ENCODE measurements at regions of chr14 and their contacts with region 1.

Region 1: GRCh38 chr14:22319526-22320361 is 269.3 kb downstream of the DAD1 start:
- DNase-seq: peak in 1 of 2 donors; percentile 17
- ATAC-seq: peak in 1 of 2 donors; percentile 46
- H3K4me3 ChIP-seq: no peak overlapping the region
- H3K27ac ChIP-seq: no peak overlapping the region
- H3K4me1 ChIP-seq: no peaks in the 10 kb centered on the region
- H3K27me3 ChIP-seq: no peaks in the 10 kb centered on the region
- CTCF ChIP-seq: peak; percentile 17 to 60 (median 43)
- POLR2A ChIP-seq: no peak

Region 2: DNA sequence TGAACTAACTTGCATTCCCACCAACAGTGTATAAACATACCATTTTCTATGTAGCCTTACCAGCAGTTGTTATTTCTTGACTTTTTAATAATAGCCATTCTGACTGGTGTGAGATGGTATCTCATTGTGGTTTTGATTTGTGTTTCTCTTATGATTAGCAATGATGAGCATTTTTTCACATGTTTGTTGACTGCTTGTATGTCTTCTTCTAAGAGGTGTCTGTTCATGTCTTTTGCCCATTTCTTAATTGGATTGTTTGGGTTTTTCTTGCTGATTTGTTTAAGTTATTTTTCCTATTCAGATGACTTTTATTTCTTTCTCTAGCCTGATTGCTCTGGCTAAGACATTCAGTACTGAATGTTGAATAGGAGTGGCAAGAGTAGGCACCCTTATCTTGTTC is 39.0 kb after region 1 on chr14:
- in situ Hi-C with region 1: no loop called
- intact Hi-C with region 1: no loop called
- DNase-seq: no peak
- ATAC-seq: no peak
- H3K4me3 ChIP-seq: no peak overlapping the region
- H3K27ac ChIP-seq: no peak overlapping the region
- H3K4me1 ChIP-seq: no peaks in the 10 kb centered on the region
- H3K27me3 ChIP-seq: no peaks in the 10 kb centered on the region
- CTCF ChIP-seq: no peak
- POLR2A ChIP-seq: no peak

Region 3: DNA sequence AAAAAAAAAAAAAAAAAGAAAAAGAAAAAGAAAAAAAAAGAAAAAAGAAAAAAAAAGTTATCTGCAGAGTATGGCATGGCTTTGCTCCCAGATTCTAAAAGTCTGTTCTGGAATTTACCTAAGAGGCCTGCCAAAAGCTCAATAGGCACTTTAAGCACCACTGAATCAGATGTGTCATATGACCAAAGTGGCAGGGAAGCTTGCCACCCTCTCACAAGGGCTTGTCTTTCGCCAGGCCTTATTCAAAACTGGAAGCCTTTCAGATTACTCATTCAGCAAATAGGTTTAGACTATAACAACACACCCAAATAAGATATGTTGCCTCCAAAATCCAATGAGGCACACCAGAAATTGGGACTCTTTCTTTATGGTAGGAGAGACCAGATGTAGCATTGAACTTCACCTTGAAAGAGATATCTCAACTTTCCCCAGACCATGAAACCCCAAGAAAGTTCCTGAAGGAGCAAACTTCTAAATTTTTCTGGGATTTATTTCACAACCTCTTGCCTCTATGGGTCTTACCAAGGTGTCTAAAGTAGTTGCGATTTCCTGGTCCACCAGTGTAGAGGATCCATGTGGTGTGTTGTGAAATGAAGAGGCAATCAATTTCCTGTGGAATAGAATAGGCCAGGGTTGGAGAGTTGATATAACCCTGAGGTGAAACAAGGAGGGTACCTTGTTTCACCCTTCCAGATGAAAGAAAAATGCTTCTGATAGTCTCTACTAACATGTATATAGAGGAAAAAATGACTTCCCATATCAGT is 50.5 kb after region 1 on chr14:
- in situ Hi-C with region 1: loop called in 3 of 4 experiments (anchors 5 to 10 kb)
- intact Hi-C with region 1: loop called (anchors 1 kb)
- DNase-seq: no peak
- ATAC-seq: peak; percentile 65 to 69
- H3K4me3 ChIP-seq: no peak overlapping the region
- H3K27ac ChIP-seq: no peak overlapping the region
- H3K4me1 ChIP-seq: no peaks in the 10 kb centered on the region
- H3K27me3 ChIP-seq: no peaks in the 10 kb centered on the region
- CTCF ChIP-seq: no peak
- POLR2A ChIP-seq: no peak

Region 4: DNA sequence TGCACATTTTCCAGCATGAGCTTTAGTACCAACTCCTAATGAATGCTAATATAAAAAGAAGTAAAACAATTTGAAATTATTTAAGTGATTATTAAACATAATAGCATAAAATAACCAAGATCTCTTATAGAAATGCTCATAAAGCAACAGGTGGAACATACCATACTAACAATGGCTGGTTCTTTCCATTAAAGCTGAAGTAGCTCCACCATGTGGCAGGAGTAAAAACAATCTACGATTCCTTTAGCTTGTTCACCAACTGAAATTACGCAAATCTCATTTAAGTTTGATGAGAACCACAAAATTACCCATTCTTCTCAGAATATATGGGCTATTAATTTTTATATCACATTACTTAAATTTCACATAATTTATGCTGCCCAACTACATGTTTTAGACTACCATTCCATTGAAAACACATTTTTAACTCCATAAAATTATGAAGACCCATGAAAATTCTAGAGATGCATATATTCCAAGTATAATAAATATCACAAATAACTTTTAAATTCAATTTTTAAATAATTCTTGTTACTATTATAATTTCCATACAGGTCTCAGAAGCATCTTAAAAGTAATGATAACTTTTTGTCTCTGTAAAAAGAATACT is 55.7 kb after region 1 on chr14:
- in situ Hi-C with region 1: loop called in 3 of 4 experiments (anchors 5 to 10 kb)
- intact Hi-C with region 1: loop called (anchors 1 kb)
- DNase-seq: no peak
- ATAC-seq: no peak
- H3K4me3 ChIP-seq: no peak overlapping the region
- H3K27ac ChIP-seq: no peak overlapping the region
- H3K4me1 ChIP-seq: no peaks in the 10 kb centered on the region
- H3K27me3 ChIP-seq: no peaks in the 10 kb centered on the region
- CTCF ChIP-seq: peak in 4 of 5 experiments; percentile 32 to 47 (median 40)
- POLR2A ChIP-seq: no peak

Region 5: GRCh38 chr14:22466491-22466890 is 146.7 kb after region 1 on chr14:
- in situ Hi-C with region 1: no loop called
- intact Hi-C with region 1: loop called (anchors 10 kb)
- DNase-seq: no peak
- ATAC-seq: no peak
- H3K4me3 ChIP-seq: no peak overlapping the region
- H3K27ac ChIP-seq: no peak overlapping the region
- H3K4me1 ChIP-seq: no peaks in the 10 kb centered on the region
- H3K27me3 ChIP-seq: no peaks in the 10 kb centered on the region
- CTCF ChIP-seq: no peak
- POLR2A ChIP-seq: no peak

Region 6: DNA sequence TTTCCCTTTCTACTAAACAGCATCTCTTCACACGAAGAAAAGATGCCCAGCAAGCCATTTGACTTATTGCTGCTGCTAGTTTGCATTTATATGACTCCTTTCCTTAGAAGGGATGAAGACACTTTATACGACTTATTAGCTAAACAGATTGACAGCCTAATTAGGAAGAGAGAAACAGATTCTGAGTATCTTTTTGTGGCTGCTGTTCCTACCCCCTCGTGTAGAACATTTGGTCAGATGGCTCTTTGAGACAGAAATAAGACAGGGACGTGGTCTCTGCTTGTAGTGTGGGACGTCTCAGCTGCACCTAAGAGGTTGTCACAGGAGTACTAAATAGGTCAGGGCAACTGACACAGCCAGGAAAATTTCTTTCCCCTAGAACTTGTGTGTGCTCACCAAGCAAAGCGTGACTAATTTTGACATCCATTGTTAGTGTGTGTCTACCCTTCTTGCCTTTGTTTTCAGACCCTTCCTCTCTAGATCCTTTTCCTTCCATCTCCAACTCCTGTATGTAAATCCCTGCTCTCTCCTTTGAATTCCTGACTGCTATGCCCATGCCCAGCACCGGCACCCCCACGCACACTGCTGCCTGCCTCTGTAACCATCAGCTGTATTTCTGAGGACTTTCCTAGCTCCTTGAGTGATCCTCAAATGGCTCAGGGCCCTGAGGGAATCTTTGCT is 186.1 kb after region 1 on chr14:
- in situ Hi-C with region 1: no loop called
- intact Hi-C with region 1: no loop called
- DNase-seq: no peak
- ATAC-seq: no peak
- H3K4me3 ChIP-seq: no peak overlapping the region
- H3K27ac ChIP-seq: no peak overlapping the region
- H3K4me1 ChIP-seq: no peaks in the 10 kb centered on the region
- H3K27me3 ChIP-seq: no peaks in the 10 kb centered on the region
- CTCF ChIP-seq: no peak
- POLR2A ChIP-seq: no peak

Measured in gastrocnemius medialis (tissue), 4 donors.